K562 (cell line): ENCODE measurements at regions of chr16 and their contacts with region 1.

Region 1: GRCh38 chr16:8946544-8946943 is 17.2 kb downstream of the USP7 start:
- DNase-seq: no peak
- ATAC-seq: peak; percentile 41; the same call in 2 of the 3 replicates
- H3K4me3 ChIP-seq: no peak overlapping the region
- H3K27ac ChIP-seq: no peak overlapping the region
- H3K4me1 ChIP-seq: peaks cover 18 to 36% of the 10 kb centered on the region in 2 experiments
- H3K27me3 ChIP-seq: no peaks in the 10 kb centered on the region
- CTCF ChIP-seq: no peak
- EP300 ChIP-seq: no peak
- POLR2A ChIP-seq: no peak
- RAD21 ChIP-seq: no peak

Region 2: GRCh38 chr16:8644211-8645140 is 302.1 kb before region 1 on chr16:
- CTCF ChIA-PET with region 1: no interaction called
- POLR2A ChIA-PET with region 1: no interaction called
- in situ Hi-C with region 1: no loop called
- intact Hi-C with region 1: no loop called
- DNase-seq: no peak
- ATAC-seq: no peak
- H3K4me3 ChIP-seq: no peak overlapping the region
- H3K27ac ChIP-seq: no peak overlapping the region
- H3K4me1 ChIP-seq: peaks cover 2 to 8% of the 10 kb centered on the region in 2 experiments; a peak in 4 of 5 replicates
- H3K27me3 ChIP-seq: no peaks in the 10 kb centered on the region
- CTCF ChIP-seq: no peak
- EP300 ChIP-seq: no peak
- POLR2A ChIP-seq: no peak
- RAD21 ChIP-seq: no peak

Region 3: DNA sequence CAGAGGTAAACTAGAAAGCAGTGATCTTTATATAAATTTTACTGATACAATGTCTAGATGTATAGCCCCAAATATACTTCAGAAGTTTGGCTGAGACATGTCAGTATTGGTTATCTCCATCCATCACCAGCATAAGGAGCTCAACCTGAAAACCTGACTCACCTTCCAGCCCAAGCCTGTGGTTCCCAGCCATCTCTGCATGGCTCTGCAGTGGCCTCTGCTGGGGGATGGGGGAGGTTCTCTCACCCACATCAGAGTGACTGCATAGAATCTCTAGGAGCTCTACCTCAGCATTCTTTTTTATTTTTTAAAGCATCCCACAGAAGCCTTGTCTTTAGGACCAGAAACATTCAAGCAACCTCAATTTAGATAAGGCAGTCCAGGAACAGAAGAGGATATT is 10.1 kb before region 1 on chr16:
- CTCF ChIA-PET with region 1: no interaction called
- POLR2A ChIA-PET with region 1: interaction called, 14 read pairs
- in situ Hi-C with region 1: no loop called
- intact Hi-C with region 1: no loop called
- DNase-seq: peak; percentile 59 to 68 (median 63)
- ATAC-seq: peak; percentile 92
- H3K4me3 ChIP-seq: no peak overlapping the region
- H3K27ac ChIP-seq: no peak overlapping the region
- H3K4me1 ChIP-seq: no peaks in the 10 kb centered on the region; a peak in 2 of 5 replicates
- H3K27me3 ChIP-seq: no peaks in the 10 kb centered on the region
- CTCF ChIP-seq: peak; percentile 70 to 72 (median 71)
- EP300 ChIP-seq: no peak
- POLR2A ChIP-seq: no peak
- RAD21 ChIP-seq: peak; percentile 3 to 53; a peak in 2 of 4 replicates

Region 4: DNA sequence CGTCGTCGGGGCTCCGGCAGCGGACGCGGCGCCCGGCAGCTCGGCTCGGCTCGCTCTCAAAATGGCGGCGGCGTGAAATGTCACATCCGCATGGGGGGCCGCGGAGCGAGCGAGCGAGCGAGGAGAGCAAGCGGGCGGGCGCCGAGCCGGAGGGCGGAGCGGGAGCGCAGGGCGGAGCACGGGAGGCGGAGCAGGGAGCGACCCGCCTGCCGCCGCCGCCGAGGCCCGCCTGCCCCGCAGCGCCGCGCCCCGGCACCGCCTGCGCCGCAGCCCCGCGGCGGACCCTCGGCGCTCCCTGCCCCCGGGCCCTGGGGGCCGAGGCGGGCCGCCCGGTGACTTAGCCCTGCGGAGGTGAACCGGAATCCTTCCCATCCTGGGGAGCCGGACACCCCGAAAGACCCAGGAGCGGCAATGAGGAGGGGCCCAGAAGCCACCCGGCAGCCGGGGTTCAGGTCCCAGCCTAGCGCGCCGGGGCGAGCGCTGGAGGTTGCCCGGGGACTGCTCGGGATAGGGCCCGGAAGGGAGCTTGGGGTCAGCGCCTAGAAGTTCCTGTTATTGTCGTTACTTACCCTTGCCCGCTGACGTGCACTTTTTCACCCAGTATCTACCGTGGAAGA is 17.4 kb after region 1 on chr16 and contains the start of gene USP7:
- CTCF ChIA-PET with region 1: no interaction called
- POLR2A ChIA-PET with region 1: interaction called, 60 read pairs
- in situ Hi-C with region 1: no loop called
- intact Hi-C with region 1: no loop called
- DNase-seq: peak; percentile 93 to 94 (median 93)
- ATAC-seq: peak; percentile 91
- H3K4me3 ChIP-seq: peak within 1 kb of the TSS; percentile 60
- H3K27ac ChIP-seq: peak within 1 kb of the TSS; percentile 65
- H3K4me1 ChIP-seq: peaks cover 32 to 48% of the 10 kb centered on the region in 2 experiments
- H3K27me3 ChIP-seq: no peaks in the 10 kb centered on the region
- CTCF ChIP-seq: 0 out of 6 replicates have a peak, but pooled peaks of 1 of the 3 experiments have one; percentile 4
- EP300 ChIP-seq: no peak
- POLR2A ChIP-seq: peak; percentile 50; the same call in 1 of the 2 replicates
- RAD21 ChIP-seq: no peak
- polyA plus RNA-seq, gene USP7: 17.1 to 27.2 TPM